HEK293T (cell line): ENCODE measurements at regions of chr19 and their contacts with region 1.

Region 1: GRCh38 chr19:43934985-43935708 is at the start of gene ZNF45:
- DNase-seq: peak; percentile 92

Region 2: DNA sequence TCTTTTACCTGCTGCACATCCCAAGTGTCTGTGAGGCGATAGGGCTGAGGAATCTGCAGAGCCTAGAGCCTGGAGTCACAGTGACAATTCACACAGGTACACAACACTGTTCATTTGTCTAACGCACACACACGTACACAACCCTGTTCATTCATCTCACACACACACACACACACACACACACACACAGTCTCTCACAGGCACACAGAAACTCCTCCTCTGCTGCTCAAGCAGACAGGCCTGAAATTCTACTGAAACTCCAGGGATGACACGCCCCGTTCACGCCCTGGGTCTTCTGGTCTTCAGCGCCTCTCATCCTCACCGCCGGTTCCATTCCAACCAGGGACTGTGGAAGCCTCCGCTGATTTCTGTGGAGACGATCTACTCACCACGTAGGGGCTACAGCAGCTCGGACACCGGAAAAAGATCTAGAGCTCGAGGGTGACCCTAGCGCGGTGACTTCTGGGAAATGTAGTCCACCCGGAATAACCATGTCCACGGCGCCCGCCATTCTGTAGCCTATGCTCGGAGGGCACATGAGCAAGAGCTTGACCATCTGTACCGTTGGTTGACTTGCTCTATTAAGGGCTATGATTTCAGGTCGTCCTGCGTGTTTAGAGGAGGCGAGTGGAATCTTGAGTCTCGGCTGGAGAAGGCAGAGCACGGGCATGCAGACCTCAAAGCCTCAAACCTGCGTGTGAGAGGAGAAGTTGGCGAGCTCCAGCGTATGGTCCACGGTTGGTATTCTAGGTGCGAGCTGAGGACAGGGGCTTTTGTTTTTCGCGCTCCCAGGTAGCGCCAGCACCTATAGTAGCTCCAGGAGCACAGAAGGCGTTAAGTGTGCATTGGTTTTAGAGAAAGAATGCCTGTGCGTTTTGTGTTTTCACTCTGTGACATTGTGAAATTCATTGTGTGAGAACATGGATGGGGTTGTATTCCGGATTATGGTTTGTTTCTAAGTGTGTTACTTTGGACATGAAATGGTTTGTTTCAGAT is 33.5 kb before region 1 on chr19:
- CTCF ChIA-PET with region 1: no interaction called
- POLR2A ChIA-PET with region 1: interaction called, 14 read pairs
- DNase-seq: peak; percentile 81

Region 3: GRCh38 chr19:43950834-43951645 is 15.9 kb after region 1 on chr19 and contains the start of gene ZNF221:
- CTCF ChIA-PET with region 1: interaction called, 3 read pairs
- POLR2A ChIA-PET with region 1: interaction called, 23 read pairs
- DNase-seq: peak; percentile 91